ENCODE measurements at regions of chrX and their contacts with region 1.

Region 1: GRCh38 chrX:70030301-70030767 is 19.4 kb downstream of the AWAT2 start:
- DNase-seq: no peak
- ATAC-seq: peak; percentile 47
- H3K4me3 ChIP-seq: no peak overlapping the region
- H3K27ac ChIP-seq: no peak overlapping the region
- H3K4me1 ChIP-seq: no peaks in the 10 kb centered on the region
- H3K27me3 ChIP-seq: no peaks in the 10 kb centered on the region

Region 2: GRCh38 chrX:69538321-69538876 is 491.9 kb before region 1 on chrX:
- intact Hi-C with region 1: loop called in 1 of 2 experiments (anchors 5 kb)
- DNase-seq: peak; percentile 84 to 93
- ATAC-seq: peak; percentile 89
- H3K4me3 ChIP-seq: no peak overlapping the region
- H3K27ac ChIP-seq: no peak overlapping the region
- H3K4me1 ChIP-seq: no peaks in the 10 kb centered on the region
- H3K27me3 ChIP-seq: no peaks in the 10 kb centered on the region

Region 3: DNA sequence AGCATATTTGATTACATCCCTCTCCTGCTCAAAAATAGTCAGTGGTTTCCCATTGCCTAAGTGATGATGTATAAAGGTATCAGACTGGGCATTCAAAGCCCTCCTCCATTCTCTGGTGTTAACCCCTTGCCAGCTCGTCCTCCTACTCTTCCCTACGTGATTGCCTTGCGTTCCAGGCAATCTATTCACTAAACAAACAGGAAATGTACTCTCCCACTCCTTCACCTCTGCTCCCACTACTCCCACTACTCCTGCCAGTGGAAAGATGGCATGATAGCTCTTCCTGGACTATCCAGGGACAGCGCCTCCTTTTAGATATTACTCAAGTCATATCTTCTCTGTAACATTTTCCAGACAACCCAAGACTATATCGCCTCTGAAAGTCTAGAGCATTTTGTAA is 152.8 kb after region 1 on chrX:
- intact Hi-C with region 1: no loop called
- DNase-seq: no peak
- ATAC-seq: no peak
- H3K4me3 ChIP-seq: no peak overlapping the region
- H3K27ac ChIP-seq: no peak overlapping the region
- H3K4me1 ChIP-seq: no peaks in the 10 kb centered on the region
- H3K27me3 ChIP-seq: no peaks in the 10 kb centered on the region